ENCODE measurements at regions of chr14 and their contacts with region 1.

Region 1: DNA sequence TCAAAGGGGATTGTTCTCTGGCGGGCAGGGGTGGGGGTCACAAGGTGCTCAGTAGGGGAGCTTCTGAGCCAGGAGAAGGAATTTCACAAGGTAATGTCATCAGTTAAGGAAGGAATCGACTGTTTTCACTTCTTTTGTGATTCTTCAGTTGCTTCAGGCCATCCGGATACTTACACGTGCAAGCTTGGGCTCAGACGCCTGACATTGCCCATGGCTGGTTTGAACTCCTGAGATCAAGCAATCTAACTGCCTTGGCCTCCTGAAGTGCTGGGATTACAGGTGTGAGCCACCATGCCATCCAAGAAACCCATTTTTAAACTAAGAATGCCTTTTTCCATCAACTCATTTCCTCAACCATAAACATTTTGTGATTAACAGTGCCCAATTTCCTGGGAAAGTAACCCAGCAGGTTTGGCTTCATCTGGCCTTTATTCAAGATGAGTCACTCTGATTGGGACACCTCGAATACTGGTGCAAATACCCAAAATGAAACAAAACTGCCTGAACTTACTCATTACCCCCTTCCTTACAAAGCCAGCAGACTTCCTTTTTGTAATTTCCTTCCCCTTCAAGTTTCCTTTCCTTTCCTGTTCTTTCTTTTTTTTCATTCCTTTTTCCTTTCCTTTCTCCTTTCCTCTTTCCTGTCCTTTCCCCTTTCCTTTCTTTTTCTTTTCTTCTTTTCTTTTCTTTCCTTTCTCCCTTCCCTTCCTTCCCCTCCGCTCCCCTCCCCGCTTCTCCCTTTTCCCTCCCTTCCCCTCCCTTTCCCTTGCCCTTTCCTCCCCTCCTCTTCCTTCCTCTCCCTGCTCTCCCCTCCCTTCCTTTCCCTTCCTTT is 10.2 kb upstream of the RNASE10 start:
- DNase-seq: peak; percentile 19
- H3K4me3 Mint-ChIP-seq: no peak overlapping the region
- H3K27ac Mint-ChIP-seq: no peak overlapping the region
- H3K4me1 Mint-ChIP-seq: peaks cover 57% of the 10 kb centered on the region
- H3K27me3 Mint-ChIP-seq: no peaks in the 10 kb centered on the region

Region 2: DNA sequence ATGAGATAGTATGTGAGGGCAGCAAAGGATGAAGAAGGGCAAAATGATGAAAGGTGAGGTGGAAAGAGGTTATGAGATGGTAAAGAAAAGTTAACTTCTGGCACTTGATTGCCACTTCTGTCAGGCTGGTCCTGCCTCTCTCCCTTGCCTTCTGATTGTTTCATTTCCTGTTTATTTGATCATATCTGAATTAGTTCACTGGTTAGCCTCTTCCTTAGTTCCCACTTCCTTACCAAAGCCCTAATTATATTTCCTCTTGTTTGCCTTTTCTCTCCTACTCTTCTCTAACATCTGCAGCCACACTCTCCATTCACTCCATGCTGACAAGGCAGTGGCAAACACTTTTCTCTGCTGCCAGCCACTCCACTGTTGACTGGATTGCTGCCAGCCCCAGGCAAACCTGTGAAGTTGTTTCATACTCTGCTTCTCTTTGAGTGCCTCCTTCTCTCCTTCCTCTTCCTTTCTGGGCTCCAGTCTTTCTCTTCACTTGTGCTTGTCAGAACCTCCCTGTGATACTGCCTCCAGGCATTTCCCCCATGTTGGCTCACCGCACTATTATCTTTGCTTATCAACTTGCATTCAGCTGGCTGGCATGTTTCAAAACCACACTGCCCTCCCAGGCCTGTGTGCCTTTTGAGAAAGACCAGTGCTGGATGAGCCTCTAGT is 17.8 kb before region 1 on chr14:
- CTCF ChIA-PET with region 1: interaction called, 3 read pairs
- intact Hi-C with region 1: loop called (anchors 1 kb)
- DNase-seq: peak; percentile 41
- H3K4me3 Mint-ChIP-seq: peak overlapping the region; percentile 19
- H3K27ac Mint-ChIP-seq: peak overlapping the region; percentile 92
- H3K4me1 Mint-ChIP-seq: peaks cover 58% of the 10 kb centered on the region
- H3K27me3 Mint-ChIP-seq: no peaks in the 10 kb centered on the region